ENCODE measurements at regions of chr15 and their contacts with region 1.

Region 1: GRCh38 chr15:57213862-57214261 is 162.4 kb upstream of the CGNL1 start:
- DNase-seq: no peak
- ATAC-seq: peak; percentile 61 to 70

Region 2: GRCh38 chr15:56491110-56491722 is 722.6 kb before region 1 on chr15:
- intact Hi-C with region 1: loop called in 1 of 2 experiments (anchors 10 kb)
- DNase-seq: peak; percentile 58
- ATAC-seq: peak; percentile 57 to 75